Aorta (tissue), 5 donors: ENCODE measurements at regions of chr11 and their contacts with region 1.

Region 1: GRCh38 chr11:30432178-30432577 is 109.3 kb downstream of the ARL14EP start:
- DNase-seq: no peak
- ATAC-seq: peak; percentile 26
- H3K4me3 ChIP-seq: no peak overlapping the region
- H3K27ac ChIP-seq: peak overlapping the region in 1 of 2 donors; percentile 77
- H3K4me1 ChIP-seq: peaks cover 7 to 14% of the 10 kb centered on the region in 2 donors
- H3K27me3 ChIP-seq: no peaks in the 10 kb centered on the region

Region 2: DNA sequence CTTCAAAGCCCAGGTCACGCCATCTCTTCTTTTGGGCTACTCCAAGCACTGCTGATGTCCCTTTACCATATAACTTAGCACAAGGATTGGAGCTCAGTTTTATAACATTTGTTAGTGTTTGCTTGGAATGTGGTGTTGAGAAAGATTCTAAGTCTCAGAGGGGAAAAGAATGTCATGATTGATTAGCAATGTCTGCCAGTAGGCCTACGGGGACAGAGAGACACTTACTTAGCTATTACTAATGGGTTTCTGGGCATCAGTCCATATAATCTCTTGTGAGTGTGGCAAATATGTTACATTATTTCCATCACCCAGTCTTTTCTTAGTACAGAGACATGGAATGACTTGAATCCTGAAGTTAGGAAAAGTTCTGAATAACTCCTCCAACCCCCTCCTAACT is 276.8 kb before region 1 on chr11:
- intact Hi-C with region 1: no loop called
- DNase-seq: no peak
- ATAC-seq: no peak
- H3K4me3 ChIP-seq: no peak overlapping the region
- H3K27ac ChIP-seq: no peak overlapping the region
- H3K4me1 ChIP-seq: no peaks in the 10 kb centered on the region
- H3K27me3 ChIP-seq: no peaks in the 10 kb centered on the region

Region 3: DNA sequence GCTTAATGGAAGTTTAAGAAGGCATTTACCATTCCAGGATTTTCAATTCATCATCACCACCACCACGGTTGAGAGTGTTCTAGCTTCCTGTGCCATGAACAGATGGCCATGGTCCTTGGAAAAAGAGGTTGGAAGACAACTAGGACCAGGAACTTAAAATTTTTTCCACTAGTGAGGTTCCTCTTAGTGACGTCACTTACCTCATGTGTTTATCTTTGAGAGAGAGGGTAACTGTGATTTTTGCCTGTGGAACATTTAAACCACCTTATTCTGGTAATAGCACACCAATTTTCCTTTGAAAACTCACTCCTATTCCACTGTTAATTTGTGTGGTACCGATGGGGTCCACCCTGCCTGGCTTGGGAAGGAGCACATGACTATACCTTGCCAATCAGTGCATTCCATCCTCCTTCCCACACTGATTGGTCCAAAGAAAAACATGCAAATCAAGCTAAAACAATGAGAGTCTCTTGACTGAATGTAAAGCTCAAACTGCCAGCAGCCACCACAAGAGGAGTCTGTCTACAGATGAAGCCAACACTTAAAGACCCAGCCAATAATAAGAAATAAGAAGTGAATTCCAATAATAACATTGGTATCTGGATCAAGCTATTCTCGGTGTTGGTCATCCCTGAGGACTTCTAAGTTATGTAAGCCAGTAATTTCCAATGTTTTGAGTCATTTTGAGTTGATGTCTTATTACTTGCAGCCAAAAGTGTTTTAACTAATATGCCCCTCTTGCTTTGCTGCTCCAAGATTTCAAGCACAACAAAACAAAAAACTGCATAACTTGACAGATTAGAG is 42.2 kb after region 1 on chr11:
- intact Hi-C with region 1: loop called in 1 of 2 experiments (anchors 5 kb)
- DNase-seq: no peak
- ATAC-seq: peak; percentile 44
- H3K4me3 ChIP-seq: no peak overlapping the region
- H3K27ac ChIP-seq: peak overlapping the region in 1 of 2 donors; percentile 73
- H3K4me1 ChIP-seq: peaks cover 0 to 17% of the 10 kb centered on the region in 2 donors
- H3K27me3 ChIP-seq: no peaks in the 10 kb centered on the region